ENCODE measurements at regions of chr1 and their contacts with region 1.

Region 1: DNA sequence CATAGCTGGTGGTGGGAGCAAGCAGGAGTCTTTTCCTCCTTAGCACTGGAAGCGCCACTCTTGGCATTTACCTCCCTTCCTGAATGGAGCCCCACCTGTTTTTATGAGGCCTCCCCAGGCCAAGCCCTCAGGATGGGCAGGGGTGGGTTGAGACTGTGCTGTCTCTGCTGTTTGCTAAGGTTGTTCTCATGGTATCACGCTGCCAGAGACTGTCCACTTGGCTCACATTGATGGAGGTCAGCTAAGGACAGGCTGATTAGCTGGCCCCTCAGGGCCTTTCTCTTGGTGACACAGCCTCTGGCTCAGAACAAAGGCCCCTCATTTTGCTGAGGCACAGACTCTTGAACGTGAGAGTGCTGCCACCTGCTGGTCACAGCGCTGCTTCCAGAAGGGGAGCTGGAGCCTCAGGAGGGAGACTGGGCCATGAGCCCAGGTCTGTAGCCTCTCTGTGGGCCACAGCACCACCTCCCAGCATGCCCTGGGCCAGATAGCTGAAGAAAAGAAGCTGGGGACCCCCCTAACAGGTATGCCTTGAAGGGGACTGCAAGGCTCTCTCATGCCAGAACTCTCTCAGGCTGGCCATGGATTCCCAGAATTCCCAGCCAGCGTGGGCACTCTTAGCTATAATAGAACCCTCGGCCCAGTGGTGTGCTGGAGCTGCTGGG is 85.6 kb downstream of the CD58 start:
- DNase-seq: peak; percentile 90
- H3K4me3 Mint-ChIP-seq: no peak overlapping the region
- H3K27ac Mint-ChIP-seq: no peak overlapping the region
- H3K4me1 Mint-ChIP-seq: peaks cover 7% of the 10 kb centered on the region
- H3K27me3 Mint-ChIP-seq: no peaks in the 10 kb centered on the region

Region 2: DNA sequence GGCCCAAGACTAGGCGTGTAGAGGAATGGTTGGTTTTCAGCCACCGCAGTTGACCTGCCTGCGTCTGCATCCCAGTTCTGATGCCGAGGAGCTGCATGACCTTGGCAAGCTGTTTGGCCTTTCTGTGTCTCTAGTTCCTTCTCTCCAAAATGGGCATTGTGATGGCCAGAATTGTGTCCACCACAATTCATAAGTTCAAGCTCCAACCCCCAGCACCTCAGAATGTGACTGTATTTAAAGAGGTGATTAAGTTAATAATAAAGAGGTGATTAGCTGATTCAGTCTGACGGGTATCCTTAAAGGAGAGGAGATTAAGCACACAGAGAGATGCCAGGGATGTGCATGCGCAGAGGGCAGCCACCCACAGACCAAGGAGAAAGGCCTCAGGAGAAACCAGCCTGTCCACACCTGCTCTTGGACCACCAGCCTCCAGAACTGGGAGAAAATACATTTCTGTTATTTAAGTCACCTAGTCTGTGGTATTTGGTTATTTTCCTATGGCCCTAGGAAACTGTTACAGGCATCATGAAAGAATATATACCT is 345.5 kb before region 1 on chr1:
- CTCF ChIA-PET with region 1: interaction called, 304 read pairs
- POLR2A ChIA-PET with region 1: interaction called, 5 read pairs
- intact Hi-C with region 1: loop called (anchors 1 kb)
- DNase-seq: no peak
- H3K4me3 Mint-ChIP-seq: no peak overlapping the region
- H3K27ac Mint-ChIP-seq: no peak overlapping the region
- H3K4me1 Mint-ChIP-seq: peaks cover 8% of the 10 kb centered on the region
- H3K27me3 Mint-ChIP-seq: peaks cover 6% of the 10 kb centered on the region

Region 3: DNA sequence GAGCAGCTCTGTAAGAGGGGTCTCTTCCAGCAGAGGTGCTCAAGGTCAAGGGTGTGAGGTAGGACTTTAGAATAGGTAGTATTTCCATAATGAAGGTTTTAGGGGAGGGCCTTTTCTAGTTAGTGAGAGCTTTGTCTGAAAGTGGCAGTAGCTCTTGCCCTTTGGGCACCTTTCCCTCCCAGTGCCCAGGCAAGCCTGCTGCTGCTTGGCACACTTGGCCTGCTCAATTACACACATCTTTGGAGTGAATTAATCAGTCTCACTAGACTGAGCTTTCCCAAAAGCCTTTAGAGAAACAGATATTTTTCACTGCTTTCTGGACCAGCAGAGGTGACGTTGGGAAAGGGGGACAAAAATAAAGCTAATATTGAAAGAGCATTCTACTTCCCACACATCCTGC is 326.0 kb before region 1 on chr1:
- CTCF ChIA-PET with region 1: interaction called, 90 read pairs
- POLR2A ChIA-PET with region 1: no interaction called
- intact Hi-C with region 1: loop called (anchors 5 kb)
- DNase-seq: no peak
- H3K4me3 Mint-ChIP-seq: no peak overlapping the region
- H3K27ac Mint-ChIP-seq: no peak overlapping the region
- H3K4me1 Mint-ChIP-seq: no peaks in the 10 kb centered on the region
- H3K27me3 Mint-ChIP-seq: no peaks in the 10 kb centered on the region

Region 4: DNA sequence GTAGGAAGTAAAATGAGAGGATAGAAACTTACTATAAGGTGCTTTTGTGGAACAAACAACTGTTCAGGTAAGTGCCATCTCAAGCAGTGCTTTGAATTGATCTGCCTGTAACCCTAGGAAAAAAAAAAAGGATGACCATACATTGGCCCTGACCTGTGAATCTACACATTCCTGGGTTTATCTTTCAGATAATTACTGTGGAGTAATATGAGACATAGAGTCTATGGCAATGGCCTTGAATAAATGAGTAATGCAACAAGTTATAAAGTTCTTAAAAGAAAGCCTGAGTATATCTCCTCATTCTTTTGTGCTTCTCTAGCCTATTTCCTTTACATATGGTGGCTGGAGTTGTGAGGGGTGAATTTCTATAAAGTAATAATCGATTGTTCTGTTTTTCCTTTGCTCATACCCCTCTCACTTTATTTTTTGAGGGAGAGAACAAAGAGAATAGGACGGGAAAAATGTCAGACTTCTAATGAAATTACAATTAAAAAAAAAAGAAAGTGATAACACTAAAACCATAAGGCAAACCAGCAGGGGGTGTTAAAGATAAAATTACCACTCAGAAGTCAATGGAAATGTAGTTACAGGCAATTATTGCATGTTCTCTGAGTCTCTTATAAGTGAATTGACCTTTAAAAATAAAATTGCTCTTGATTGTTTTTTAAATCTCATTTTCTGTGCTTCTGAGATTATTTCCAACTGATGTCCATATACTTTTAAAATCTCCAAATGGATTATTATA is 124.6 kb before region 1 on chr1:
- CTCF ChIA-PET with region 1: interaction called, 19 read pairs
- POLR2A ChIA-PET with region 1: no interaction called
- intact Hi-C with region 1: loop called (anchors 1 kb)
- DNase-seq: no peak
- H3K4me3 Mint-ChIP-seq: no peak overlapping the region
- H3K27ac Mint-ChIP-seq: no peak overlapping the region
- H3K4me1 Mint-ChIP-seq: peaks cover 11% of the 10 kb centered on the region
- H3K27me3 Mint-ChIP-seq: no peaks in the 10 kb centered on the region

Region 5: DNA sequence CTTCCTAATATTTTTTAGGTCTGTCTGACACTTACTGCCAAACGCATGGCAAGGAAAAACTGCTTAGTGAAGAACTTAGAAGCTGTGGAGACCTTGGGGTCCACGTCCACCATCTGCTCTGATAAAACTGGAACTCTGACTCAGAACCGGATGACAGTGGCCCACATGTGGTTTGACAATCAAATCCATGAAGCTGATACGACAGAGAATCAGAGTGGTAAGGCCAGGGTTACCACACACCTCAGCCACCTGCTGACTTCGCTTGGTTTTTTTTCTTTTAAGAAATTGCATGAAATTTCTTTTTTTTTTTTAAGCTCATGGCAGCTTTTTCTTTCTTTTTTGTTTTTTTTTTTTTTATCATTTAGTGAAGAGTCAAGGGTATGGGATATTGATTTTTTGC is 95.0 kb before region 1 on chr1:
- CTCF ChIA-PET with region 1: interaction called, 22 read pairs
- POLR2A ChIA-PET with region 1: no interaction called
- intact Hi-C with region 1: no loop called
- DNase-seq: peak; percentile 80
- H3K4me3 Mint-ChIP-seq: no peak overlapping the region
- H3K27ac Mint-ChIP-seq: no peak overlapping the region
- H3K4me1 Mint-ChIP-seq: peaks cover 55% of the 10 kb centered on the region
- H3K27me3 Mint-ChIP-seq: no peaks in the 10 kb centered on the region

Region 6: DNA sequence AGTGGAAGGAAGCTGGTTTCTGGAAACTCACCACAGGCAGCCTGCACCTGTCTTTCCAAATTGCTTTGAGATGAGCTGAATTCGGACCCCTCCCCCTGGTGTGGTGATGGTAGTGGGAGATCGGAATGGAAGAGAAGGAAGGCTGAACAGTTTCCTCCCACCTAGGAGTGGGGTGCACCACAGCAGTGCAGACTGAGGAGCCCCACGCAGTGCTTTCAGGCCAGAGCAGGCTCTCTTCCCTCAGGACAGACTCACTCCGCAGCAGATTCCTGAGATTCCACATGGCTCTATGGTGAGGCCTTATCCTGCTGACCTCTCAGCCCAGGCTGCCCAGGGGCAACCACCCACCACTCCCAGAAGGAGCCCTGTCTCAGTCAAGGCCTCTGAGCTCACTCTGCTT is 31.3 kb before region 1 on chr1:
- CTCF ChIA-PET with region 1: interaction called, 14 read pairs
- POLR2A ChIA-PET with region 1: no interaction called
- intact Hi-C with region 1: no loop called
- DNase-seq: no peak
- H3K4me3 Mint-ChIP-seq: no peak overlapping the region
- H3K27ac Mint-ChIP-seq: no peak overlapping the region
- H3K4me1 Mint-ChIP-seq: no peaks in the 10 kb centered on the region
- H3K27me3 Mint-ChIP-seq: no peaks in the 10 kb centered on the region

Region 7: DNA sequence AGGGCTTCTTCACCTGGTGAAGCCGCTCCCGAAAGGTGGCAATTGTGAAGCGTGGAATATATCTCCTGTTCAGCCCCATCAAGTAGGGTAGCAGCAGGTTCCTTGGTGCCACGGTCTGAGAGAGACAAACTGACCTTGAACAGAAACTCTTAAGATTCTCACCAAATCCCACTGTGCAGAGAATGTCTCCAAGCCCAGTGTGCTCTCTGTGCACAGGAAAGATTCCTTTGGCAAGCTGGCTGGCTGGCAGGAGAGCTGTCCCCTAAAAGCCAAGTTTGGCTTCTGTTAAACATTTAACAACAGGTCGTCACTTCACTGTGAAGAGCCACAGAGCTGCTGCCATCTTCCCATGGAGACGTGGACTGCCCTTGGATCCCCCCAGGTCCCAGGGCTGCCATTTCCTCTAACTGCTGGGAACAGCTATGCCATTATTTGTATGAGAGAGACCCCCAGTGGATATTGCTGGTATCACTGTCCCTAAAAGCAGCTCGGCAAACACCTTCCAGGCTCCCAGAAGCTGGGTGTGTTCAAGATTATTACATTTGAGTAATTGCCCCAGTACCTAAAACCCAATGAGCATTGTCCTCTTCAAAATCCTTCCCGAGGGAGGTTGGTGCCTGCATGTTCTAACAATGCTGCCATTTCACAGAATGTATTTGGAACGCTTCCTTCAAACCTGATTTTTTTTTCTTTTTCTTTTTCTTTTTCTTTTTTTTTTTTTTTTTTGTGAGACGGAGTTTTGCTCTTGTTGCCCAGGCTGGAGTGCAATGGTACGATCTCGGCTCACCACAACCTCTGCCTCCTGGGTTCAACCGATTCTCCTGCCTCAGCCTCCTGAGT is 13.8 kb after region 1 on chr1:
- CTCF ChIA-PET with region 1: interaction called, 139 read pairs
- POLR2A ChIA-PET with region 1: no interaction called
- intact Hi-C with region 1: no loop called
- DNase-seq: peak; percentile 53
- H3K4me3 Mint-ChIP-seq: no peak overlapping the region
- H3K27ac Mint-ChIP-seq: no peak overlapping the region
- H3K4me1 Mint-ChIP-seq: peaks cover 27% of the 10 kb centered on the region
- H3K27me3 Mint-ChIP-seq: no peaks in the 10 kb centered on the region

Region 8: DNA sequence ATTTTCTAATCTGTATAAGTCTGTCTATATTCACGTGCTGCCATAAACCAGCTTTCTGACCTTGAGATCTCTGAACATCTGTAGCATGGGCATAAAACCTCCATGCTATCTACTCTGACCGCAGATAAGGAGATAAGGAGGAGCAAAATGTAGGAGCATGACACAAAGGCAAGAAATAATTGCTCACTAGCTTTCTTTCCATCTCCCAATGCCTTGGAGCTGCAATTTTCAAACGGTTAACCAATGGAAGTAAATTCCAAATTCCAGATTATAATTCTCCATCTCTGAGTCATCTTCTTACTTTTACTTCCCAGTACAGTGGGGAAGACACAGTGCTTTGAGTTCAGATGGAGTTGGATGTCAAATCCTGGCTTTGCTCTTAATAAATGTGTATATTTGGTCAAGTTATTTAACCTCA is 44.0 kb after region 1 on chr1:
- CTCF ChIA-PET with region 1: no interaction called
- POLR2A ChIA-PET with region 1: no interaction called
- intact Hi-C with region 1: no loop called
- DNase-seq: no peak
- H3K4me3 Mint-ChIP-seq: no peak overlapping the region
- H3K27ac Mint-ChIP-seq: no peak overlapping the region
- H3K4me1 Mint-ChIP-seq: peaks cover 5% of the 10 kb centered on the region
- H3K27me3 Mint-ChIP-seq: no peaks in the 10 kb centered on the region